GM10248 (cell line): ENCODE measurements at regions of chr9 and their contacts with region 1.

Region 1: DNA sequence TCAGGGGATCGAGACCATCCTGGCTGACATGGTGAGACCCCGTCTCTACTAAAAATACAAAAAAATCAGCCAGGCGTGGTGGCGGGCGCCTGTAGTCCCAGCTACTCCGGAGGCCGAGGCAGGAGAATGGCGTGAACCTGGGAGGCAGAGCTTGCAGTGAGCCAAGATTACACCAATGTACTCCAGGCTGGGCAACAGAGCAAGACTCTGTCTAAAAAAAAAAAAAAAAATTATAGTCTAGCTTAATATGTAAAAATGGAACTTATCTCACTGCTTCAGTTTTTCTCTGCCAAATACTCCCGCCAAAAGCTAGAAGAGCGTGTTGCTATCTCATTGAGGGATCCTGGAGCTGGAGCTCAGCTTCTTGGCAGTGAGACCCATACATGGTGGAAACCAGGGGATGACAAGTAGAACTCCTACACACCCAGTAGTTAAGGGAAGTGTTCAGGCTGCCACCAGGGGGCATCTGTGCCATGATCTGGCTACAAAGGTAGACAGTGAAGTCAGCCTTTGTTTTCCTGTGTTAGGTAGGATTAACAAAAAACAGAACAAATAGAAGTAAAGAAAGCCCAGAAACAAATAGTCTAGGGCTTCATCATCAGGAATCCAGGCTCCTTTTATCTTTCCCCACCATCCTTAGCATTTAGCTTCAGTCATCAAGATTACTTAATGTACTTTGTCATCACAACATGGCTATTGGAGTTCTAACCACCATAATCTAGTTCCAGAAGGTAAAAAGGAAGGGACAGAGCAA is 33.6 kb upstream of the GLIPR2 start:
- DNase-seq: peak; percentile 80
- CTCF ChIP-seq: peak; percentile 87

Region 2: DNA sequence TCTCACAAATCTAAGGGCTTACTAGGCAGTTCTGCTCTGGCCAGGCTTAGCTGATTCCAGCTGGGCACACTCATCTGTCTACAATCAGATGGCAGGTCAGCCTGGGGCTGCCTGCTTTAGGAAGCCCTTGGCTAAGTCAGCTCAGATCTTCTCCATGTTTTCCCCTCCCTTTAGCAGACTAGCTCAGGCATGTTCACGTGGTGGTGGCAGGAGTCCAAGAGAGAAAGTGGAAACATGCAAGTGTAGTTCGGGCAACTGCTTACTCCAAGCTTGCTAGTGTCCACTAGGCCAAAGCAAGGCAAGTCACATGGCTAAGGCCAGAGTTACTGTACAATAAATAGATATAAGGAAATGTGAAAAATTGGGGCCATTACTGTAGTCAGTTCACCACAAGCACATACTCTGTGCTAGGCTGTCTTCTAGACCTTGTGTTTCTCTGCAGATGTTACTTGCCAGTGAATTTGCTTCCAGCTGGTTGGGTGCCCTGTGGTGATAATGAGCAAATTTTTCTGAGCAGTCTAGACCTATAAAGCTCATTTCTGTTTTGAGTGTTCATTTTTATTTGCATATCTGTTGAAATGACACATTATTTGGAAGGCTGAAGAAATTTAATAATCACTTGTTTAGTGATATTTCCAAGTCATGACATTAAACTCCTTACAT is 27.9 kb before region 1 on chr9:
- CTCF ChIA-PET with region 1: interaction called, 14 read pairs
- POLR2A ChIA-PET with region 1: no interaction called
- DNase-seq: no peak
- CTCF ChIP-seq: no peak

Region 3: DNA sequence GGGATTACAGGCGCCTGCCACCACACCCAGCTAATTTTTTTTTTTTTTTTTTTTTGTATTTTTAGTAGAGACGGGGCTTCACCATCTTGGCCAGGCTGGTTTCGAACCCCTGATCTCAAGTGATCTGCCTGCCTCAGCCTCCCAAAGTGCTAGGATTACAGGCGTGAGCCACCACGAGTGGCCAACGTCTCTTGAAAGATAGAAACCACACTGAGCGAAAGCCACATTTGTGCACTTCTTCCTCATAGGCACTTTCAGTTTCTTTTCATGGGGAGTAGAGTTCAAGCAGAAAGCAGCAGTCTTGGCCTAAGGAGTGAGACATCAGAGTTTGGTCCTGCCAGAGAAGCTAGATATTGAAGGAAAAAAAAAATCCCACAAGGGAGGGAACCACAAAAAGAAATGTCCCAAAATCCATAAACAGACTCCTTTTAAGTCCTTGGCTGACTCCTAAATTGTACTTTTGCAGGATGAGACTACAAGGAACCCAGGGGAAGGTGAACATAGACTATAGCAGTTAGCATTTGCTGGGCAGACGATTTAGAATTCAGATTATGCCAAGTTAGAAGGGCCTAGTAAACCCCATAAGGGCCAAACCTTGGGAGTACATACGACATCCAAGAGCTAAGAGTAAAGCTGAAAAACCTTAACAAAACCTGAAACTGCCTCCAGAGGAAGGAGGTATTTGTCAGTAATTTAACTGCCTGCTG is 10.3 kb before region 1 on chr9:
- CTCF ChIA-PET with region 1: interaction called, 27 read pairs
- POLR2A ChIA-PET with region 1: no interaction called
- DNase-seq: peak; percentile 62
- CTCF ChIP-seq: no peak

Region 4: GRCh38 chr9:36136272-36136893 is 33.5 kb after region 1 on chr9 and contains the start of gene GLIPR2:
- CTCF ChIA-PET with region 1: interaction called, 14 read pairs
- POLR2A ChIA-PET with region 1: no interaction called
- DNase-seq: peak; percentile 95
- CTCF ChIP-seq: peak; percentile 18

Region 5: DNA sequence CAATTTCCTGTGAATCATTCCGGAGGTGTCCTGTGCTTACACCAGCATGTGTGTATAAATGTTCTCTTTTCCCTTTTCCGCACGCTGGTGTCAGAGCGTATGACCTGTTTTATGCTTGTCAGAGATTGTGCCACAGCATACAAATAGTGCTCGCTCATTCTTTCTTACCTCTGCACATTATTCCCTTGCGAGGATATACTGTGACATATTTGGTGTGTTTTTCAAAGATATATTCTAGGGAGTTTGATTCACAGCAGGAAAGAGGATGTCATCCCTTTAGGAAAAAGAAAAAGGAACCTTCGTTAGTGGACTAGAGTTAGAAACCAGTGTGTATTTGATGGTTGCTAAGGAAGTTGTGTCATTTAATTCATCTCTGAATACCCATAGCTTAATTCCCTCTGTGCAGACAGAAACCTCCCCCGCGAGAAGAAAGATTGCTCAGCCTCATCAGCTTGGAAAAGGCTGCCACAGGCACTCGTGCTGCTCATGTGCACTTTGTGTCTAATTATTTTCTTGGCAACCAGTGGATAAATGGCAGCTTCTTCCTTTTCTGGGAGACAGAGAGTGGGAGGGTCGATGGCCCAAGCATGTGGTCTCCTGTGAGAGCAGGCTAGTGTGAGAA is 51.5 kb after region 1 on chr9:
- CTCF ChIA-PET with region 1: interaction called, 39 read pairs
- POLR2A ChIA-PET with region 1: no interaction called
- DNase-seq: no peak
- CTCF ChIP-seq: no peak

Region 6: DNA sequence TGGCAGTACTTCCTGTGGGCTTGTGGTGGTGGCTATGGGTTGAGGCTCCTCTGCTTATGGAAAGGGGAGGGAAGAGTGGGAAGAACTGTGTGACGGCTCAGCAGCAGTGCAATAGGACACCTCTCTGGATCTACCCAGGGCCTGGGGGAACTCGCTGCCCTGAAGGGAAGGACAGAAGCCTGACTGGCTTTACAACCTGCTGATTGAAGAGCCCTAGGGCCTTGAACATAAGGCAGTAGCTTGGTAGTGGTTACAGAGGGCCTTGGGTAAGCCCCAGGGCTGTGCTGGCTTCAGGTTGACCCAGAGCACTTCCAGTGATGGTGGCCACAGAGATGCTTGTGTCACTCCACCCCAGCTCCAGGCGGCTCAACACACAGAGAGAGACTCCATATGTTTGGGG is 71.8 kb after region 1 on chr9:
- CTCF ChIA-PET with region 1: interaction called, 262 read pairs
- POLR2A ChIA-PET with region 1: no interaction called
- DNase-seq: no peak
- CTCF ChIP-seq: no peak

Region 7: DNA sequence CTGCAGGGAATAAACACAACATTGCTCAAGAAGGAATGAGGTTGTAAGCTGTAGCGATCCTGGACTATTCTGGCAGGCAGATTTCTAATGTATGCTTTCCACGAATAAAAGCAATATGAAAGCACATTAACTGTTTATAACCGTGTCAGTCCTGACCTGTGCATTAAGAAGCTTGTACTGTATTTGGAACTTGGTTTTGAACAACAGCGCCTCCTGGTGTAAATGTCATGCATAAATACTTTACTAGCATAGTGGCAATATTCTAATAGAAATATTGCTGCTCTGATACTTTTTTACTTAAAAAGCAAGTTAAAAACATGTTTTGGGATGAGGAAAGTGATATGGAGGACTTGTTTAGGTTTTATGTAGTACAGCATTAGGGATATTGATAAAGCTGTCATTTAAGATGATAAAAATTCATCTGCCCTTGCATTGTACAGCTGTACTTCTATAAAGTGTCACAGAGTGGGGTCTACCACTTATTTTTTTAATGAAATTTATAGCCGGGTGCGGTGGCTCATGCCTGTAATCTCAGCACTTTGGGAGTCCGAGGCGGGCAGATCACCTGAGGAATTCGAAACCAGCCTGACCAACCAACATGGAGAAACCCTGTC is 226.0 kb after region 1 on chr9:
- CTCF ChIA-PET with region 1: interaction called, 34 read pairs
- POLR2A ChIA-PET with region 1: no interaction called
- DNase-seq: peak; percentile 69
- CTCF ChIP-seq: peak; percentile 63